T-cell (primary cell): ENCODE measurements at regions of chr6 and their contacts with region 1.

Region 1: GRCh38 chr6:52426680-52427079 is 6.5 kb downstream of the EFHC1 start:
- DNase-seq: no peak
- ATAC-seq: no peak
- H3K4me3 ChIP-seq: no peak overlapping the region
- H3K4me3 Mint-ChIP-seq: no peak overlapping the region
- H3K27ac ChIP-seq: no peak overlapping the region
- H3K27ac Mint-ChIP-seq: no peak overlapping the region
- H3K4me1 ChIP-seq: no peaks in the 10 kb centered on the region
- H3K4me1 Mint-ChIP-seq: peaks cover 2 to 7% (median 4%) of the 10 kb centered on the region in 3 donors
- H3K27me3 ChIP-seq: no peaks in the 10 kb centered on the region
- H3K27me3 Mint-ChIP-seq: no peaks in the 10 kb centered on the region

Region 2: DNA sequence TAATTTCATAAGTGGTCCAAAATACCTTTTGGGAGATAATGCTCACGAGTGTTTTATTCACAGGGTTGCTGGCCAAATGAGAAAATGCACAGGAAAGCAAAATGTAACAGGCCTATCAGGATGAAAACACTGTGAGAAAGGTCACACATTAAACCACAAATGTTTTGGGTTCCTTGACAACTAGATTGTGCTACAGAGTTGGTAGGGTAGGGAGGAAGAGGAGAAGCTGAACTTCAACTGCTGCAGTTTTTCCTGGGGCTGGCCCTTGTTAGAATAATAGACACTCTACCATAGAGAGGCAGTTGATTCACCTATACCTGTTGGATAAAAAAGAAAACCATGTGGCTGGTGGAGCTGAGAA is 92.9 kb before region 1 on chr6:
- CTCF ChIA-PET with region 1: no interaction called
- POLR2A ChIA-PET with region 1: no interaction called
- DNase-seq: peak in 11 of 35 experiments; percentile 2 to 66 (median 10)
- ATAC-seq: peak; percentile 81 to 94 (median 87)
- H3K4me3 ChIP-seq: peak overlapping the region; percentile 1 to 12
- H3K4me3 Mint-ChIP-seq: peak overlapping the region; percentile 41 to 66 (median 47)
- H3K27ac ChIP-seq: peak overlapping the region; percentile 83
- H3K27ac Mint-ChIP-seq: peak overlapping the region; percentile 96 to 97
- H3K4me1 ChIP-seq: peaks cover 38 to 55% of the 10 kb centered on the region in 2 experiments
- H3K4me1 Mint-ChIP-seq: peaks cover 65 to 78% (median 68%) of the 10 kb centered on the region in 3 donors
- H3K27me3 ChIP-seq: no peaks in the 10 kb centered on the region
- H3K27me3 Mint-ChIP-seq: no peaks in the 10 kb centered on the region

Region 3: DNA sequence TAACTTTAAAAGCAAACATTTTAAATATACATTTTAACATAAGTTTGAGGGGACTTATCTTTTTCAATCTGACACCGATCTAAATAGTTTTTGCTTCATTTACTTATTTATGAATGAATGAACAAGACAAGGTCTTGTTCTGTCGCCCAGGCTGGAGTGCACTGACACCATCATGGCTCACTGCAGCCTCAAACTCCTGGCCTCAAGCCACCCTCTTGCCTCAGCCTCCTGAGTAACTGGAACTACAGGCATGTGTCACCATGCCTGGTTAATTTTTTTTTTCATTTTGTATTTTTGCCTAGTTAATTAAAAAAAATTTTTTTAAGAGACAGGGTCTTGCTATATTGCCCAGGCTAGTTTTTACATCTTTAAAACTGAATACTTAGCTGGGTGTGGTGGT is 663.9 kb after region 1 on chr6:
- CTCF ChIA-PET with region 1: no interaction called
- POLR2A ChIA-PET with region 1: interaction called in 1 of 2 experiments, 13 read pairs
- DNase-seq: no peak
- ATAC-seq: no peak
- H3K4me3 ChIP-seq: no peak overlapping the region
- H3K4me3 Mint-ChIP-seq: no peak overlapping the region
- H3K27ac ChIP-seq: no peak overlapping the region
- H3K27ac Mint-ChIP-seq: no peak overlapping the region
- H3K4me1 ChIP-seq: no peaks in the 10 kb centered on the region
- H3K4me1 Mint-ChIP-seq: no peaks in the 10 kb centered on the region
- H3K27me3 ChIP-seq: no peaks in the 10 kb centered on the region
- H3K27me3 Mint-ChIP-seq: no peaks in the 10 kb centered on the region